BJ (cell line): ENCODE measurements at regions of chr7 and their contacts with region 1.

Region 1: GRCh38 chr7:121908042-121908441 is 35.1 kb downstream of the PTPRZ1 start:
- DNase-seq: no peak
- H3K4me3 ChIP-seq: no peak overlapping the region
- H3K27me3 ChIP-seq: no peaks in the 10 kb centered on the region
- CTCF ChIP-seq: no peak

Region 2: GRCh38 chr7:121985476-121986030 is 77.5 kb after region 1 on chr7:
- CTCF ChIA-PET with region 1: no interaction called
- POLR2A ChIA-PET with region 1: no interaction called
- DNase-seq: no peak
- H3K4me3 ChIP-seq: no peak overlapping the region
- H3K27me3 ChIP-seq: 0 out of 2 replicates have a peak, but pooled peaks cover 3% of the 10 kb centered on the region
- CTCF ChIP-seq: no peak

Region 3: DNA sequence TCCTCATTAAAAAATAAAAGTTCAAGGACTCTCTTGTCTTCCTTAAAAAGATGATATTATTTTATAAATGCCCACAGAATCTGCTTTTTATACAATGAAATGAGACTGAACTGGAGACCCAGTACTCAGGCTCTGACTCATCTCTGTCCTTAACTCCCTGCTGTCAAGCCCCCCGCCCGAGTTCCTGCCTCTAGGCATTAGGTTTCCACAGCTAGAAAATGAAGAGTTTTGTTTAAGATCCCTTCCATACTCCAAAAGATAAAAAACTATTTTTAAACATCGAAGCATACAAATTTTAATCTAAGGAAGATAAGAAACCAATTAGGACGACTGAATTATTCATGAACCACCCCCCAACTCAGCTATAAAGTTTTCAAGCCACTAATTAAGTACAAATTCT is 494.2 kb after region 1 on chr7:
- CTCF ChIA-PET with region 1: no interaction called
- POLR2A ChIA-PET with region 1: interaction called, 11 read pairs
- DNase-seq: no peak
- H3K4me3 ChIP-seq: no peak overlapping the region
- H3K27me3 ChIP-seq: no peaks in the 10 kb centered on the region
- CTCF ChIP-seq: no peak